ENCODE measurements at regions of chr12 and their contacts with region 1.

Region 1: DNA sequence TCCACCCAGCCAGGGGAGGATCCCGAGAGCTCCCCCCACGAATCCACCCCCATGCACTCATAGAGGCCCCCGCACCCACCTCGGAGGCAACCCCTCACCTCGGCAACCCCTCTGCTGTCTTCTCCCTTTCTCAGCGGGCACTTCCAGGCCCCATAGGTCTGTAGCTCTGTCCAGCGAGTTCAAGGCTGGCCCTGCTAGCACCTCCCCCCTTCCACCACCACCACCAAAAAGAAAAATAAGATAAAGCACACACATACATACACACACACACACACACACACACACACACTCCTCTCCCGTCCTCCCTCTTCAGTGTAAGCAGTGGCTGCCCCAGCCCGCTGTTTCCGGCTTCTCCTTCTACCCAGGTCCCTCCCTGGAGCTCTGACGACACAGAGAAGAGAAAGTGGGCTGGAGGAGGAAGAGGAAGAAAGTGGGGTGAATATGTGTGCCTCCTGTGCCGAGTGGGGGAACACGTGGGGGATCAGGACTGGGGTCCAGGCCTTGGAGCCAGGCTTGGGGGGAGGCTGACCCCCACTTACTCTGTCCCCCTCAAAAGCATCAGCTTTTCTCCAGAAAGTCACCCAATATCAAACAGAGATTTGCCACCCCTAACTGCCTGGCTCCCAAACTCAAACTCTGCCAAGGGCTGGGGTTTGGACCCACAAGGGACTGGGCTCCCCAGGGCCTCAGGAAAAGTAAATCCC is at the start of gene STAT6:
- DNase-seq: no peak
- ATAC-seq: peak; percentile 81
- H3K4me3 ChIP-seq: peak within 1 kb of the TSS; percentile 95
- H3K27ac ChIP-seq: peak within 1 kb of the TSS; percentile 97
- H3K4me1 ChIP-seq: peaks cover 8% of the 10 kb centered on the region
- H3K27me3 ChIP-seq: no peaks in the 10 kb centered on the region
- CTCF ChIP-seq: no peak
- EP300 ChIP-seq: no peak
- POLR2A ChIP-seq: peak; percentile 74
- RAD21 ChIP-seq: no peak
- polyA plus RNA-seq, gene STAT6: 14.2 to 17.3 TPM

Region 2: DNA sequence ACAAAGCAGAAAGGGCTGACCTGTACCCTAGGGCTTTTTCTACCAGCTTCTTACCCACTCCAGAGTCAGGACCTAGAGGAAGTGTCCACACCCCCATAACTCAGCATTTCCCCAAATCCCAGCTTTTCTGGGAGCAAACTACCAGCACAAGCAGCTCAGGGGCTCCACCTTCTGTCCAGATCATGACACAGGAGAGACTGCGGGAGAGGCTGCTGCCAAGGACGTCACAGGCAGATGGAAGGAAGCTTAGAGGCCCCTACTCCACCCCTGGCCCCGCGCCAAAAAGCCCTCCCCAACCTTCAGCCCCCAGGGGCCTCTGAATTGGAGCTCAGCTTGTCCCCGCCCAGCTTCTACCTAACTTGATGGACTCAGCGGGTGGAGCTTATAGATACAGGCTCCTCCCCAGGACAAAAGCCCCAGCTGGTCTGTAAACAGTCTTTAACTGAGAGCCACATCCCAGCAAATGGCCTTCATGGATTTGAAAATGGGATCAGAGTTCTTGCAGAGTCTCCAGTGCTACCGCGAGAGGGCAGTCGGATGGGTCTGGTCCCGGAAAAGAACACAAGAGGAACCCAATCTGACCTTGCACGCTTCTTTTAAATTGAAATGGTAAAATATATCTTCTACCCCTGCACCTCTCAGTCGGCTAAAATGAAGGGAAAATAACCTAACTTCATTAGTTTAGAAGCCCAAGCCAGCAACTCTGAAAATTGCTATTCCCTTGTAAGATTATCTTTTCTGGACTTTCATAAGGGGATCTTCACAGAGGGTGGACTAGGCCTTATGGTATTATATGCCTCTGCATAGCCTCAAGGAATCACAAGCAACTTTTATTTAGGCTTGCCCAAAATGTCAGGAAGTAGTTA is 474.3 kb before region 1 on chr12:
- CTCF ChIA-PET with region 1: interaction called, 5 read pairs
- POLR2A ChIA-PET with region 1: interaction called, 3 read pairs
- RAD21 ChIA-PET with region 1: interaction called, 10 read pairs
- SMC1A ChIA-PET with region 1: no interaction called
- in situ Hi-C with region 1: no loop called
- intact Hi-C with region 1: no loop called
- DNase-seq: peak; percentile 87
- ATAC-seq: peak; percentile 69
- H3K4me3 ChIP-seq: peak overlapping the region; percentile 91
- H3K27ac ChIP-seq: peak overlapping the region; percentile 87
- H3K4me1 ChIP-seq: peaks cover 21% of the 10 kb centered on the region
- H3K27me3 ChIP-seq: no peaks in the 10 kb centered on the region
- CTCF ChIP-seq: peak; percentile 72 to 89 (median 81)
- EP300 ChIP-seq: 0 out of 4 replicates have a peak, but pooled peaks of 1 of the 2 experiments have one; percentile 22
- POLR2A ChIP-seq: no peak
- RAD21 ChIP-seq: peak; percentile 72

Region 3: DNA sequence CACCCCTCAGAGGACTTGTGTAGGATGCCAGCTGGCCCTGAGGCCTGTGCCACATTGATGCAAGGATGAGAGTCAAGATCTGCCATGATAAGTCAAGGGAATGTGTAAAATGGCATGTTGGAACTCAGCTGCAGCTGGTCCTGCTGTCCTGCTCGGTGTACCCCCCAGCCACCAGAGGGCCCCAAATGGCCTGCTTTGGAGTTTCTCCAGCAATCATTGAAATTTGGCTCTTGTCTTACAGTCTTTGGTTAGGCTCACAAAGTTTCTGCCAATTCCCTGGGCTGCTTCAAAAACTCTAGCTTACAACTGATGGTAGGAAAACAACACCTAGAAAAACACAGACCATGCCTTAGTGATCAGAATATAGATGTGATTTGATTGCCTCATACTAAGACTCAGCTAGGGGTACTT is 271.3 kb before region 1 on chr12:
- CTCF ChIA-PET with region 1: interaction called, 14 read pairs
- POLR2A ChIA-PET with region 1: no interaction called
- RAD21 ChIA-PET with region 1: interaction called, 8 read pairs
- SMC1A ChIA-PET with region 1: interaction called, 4 read pairs
- in situ Hi-C with region 1: no loop called
- intact Hi-C with region 1: loop called (anchors 5 kb)
- DNase-seq: peak; percentile 2
- ATAC-seq: peak; percentile 77
- H3K4me3 ChIP-seq: no peak overlapping the region
- H3K27ac ChIP-seq: no peak overlapping the region
- H3K4me1 ChIP-seq: no peaks in the 10 kb centered on the region
- H3K27me3 ChIP-seq: no peaks in the 10 kb centered on the region
- CTCF ChIP-seq: peak; percentile 71 to 75 (median 74)
- EP300 ChIP-seq: no peak
- POLR2A ChIP-seq: no peak
- RAD21 ChIP-seq: peak; percentile 86

Region 4: DNA sequence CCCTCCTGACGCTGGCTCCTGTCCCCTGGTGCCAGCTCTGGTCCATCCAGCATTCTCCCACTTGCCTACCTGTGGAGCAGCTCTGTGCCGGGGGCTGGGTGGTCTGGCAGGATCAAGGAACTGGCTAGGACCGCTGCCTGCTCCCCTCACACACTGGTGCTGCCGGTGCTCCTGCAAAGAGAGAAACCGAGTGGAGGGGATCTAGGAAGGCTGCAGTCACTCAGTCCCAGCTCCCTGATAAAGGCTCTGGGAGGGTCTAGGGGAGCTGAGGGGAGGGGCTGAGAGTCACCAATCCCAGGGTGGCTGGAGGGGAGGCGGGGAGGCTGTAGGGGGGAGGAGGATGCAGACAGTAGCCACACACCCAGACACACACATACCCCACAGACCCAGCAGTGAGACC is 94.9 kb before region 1 on chr12 and contains the start of gene TAC3:
- CTCF ChIA-PET with region 1: interaction called, 117 read pairs
- POLR2A ChIA-PET with region 1: interaction called, 7 read pairs
- RAD21 ChIA-PET with region 1: interaction called, 9 read pairs
- SMC1A ChIA-PET with region 1: interaction called, 54 read pairs
- in situ Hi-C with region 1: no loop called
- intact Hi-C with region 1: no loop called
- DNase-seq: no peak
- ATAC-seq: no peak
- H3K4me3 ChIP-seq: no peak within 1 kb of the TSS
- H3K27ac ChIP-seq: no peak within 1 kb of the TSS
- H3K4me1 ChIP-seq: peaks cover 19% of the 10 kb centered on the region
- H3K27me3 ChIP-seq: no peaks in the 10 kb centered on the region
- CTCF ChIP-seq: no peak
- EP300 ChIP-seq: no peak
- POLR2A ChIP-seq: no peak
- RAD21 ChIP-seq: no peak
- polyA plus RNA-seq, gene TAC3: 0.13 to 0.18 TPM

Region 5: DNA sequence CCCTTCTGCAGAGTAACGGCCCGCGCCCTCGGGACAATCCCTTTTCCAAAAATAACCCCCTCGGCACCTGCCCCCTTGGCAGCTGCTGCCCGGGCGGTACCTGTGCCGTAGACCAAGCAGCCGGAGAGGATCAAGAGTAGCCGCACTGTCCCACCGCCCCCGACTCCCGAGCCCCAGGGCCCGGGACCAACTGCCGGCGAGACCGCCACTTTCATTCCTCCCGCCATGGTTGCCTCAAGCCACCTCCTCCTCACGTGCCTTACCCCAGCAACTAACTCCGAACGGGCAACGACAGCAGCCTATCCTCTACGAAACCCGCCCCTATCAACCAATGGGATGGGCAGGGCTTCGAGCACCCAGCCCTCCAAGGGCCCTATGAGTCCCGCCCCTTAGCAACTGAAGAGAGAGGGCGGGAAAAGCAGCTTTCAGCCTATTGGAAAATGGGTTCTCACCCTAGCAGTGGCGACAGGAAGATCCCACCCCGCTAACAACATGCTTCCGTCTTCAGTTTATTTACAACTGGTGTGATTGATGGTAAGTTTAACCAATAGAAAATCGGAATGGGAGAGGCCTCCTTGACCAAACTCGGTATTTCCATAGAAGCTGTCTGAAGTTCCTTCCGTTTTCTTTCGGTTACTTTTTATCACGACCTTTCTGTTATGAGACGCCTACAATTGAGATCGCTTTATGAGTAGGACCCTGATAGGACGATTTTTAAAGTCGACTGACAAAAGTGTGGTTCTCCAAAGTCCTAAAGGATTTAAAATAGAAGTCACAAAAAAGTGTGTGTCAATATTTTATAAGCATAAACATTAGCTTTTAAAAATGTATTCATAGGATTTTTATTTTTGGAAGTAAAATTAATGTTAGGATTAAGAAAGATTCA is 32.4 kb before region 1 on chr12 and contains the start of gene NEMP1:
- CTCF ChIA-PET with region 1: interaction called, 458 read pairs
- POLR2A ChIA-PET with region 1: interaction called, 94 read pairs
- RAD21 ChIA-PET with region 1: interaction called, 285 read pairs
- SMC1A ChIA-PET with region 1: interaction called, 246 read pairs
- in situ Hi-C with region 1: no loop called
- intact Hi-C with region 1: no loop called
- DNase-seq: peak; percentile 100
- ATAC-seq: peak; percentile 99
- H3K4me3 ChIP-seq: peak within 1 kb of the TSS; percentile 96
- H3K27ac ChIP-seq: peak within 1 kb of the TSS; percentile 92
- H3K4me1 ChIP-seq: peaks cover 6% of the 10 kb centered on the region; the same call in 1 of the 2 replicates
- H3K27me3 ChIP-seq: no peaks in the 10 kb centered on the region
- CTCF ChIP-seq: no peak
- EP300 ChIP-seq: no peak
- POLR2A ChIP-seq: peak; percentile 90
- RAD21 ChIP-seq: no peak
- polyA plus RNA-seq, gene NEMP1: 4.0 to 4.7 TPM

Region 6: DNA sequence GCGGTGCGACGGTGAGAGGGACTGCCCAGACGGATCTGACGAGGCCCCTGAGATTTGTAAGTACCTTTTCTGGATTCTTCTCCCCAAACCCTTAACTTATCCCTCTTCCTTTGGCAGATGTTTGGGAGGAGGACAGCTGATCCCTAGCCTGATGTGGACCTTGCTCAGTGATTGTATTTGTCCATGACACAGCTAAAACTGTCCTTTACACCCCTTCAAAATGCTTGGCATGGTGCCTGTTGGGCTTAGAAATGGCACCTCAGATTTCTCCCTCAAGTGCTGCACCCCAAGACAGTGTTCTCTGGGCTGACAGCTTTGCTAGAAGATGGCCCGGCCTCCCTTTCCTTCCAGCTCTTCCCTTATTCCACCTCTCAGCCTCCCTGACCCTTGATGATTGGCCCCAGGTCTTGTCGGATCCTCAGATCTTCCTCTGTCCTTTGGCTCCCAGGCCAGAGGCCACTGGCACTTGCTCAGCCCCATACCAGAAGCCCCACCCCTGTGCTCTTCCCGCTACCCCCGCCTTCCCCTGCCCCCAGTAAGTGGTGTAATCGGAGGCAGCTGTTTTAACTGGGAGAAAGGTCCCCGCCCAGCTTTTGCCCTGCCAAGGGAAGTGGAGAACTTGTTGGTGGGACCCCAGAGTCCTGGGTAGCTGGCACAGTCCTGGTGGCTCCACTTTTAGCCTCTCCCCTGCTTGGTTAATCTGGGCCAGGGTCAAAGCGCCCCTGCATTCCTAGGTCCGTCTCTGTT is 27.5 kb after region 1 on chr12:
- CTCF ChIA-PET with region 1: no interaction called
- POLR2A ChIA-PET with region 1: no interaction called
- RAD21 ChIA-PET with region 1: no interaction called
- SMC1A ChIA-PET with region 1: no interaction called
- in situ Hi-C with region 1: no loop called
- intact Hi-C with region 1: no loop called
- DNase-seq: no peak
- ATAC-seq: no peak
- H3K4me3 ChIP-seq: no peak overlapping the region
- H3K27ac ChIP-seq: no peak overlapping the region
- H3K4me1 ChIP-seq: no peaks in the 10 kb centered on the region
- H3K27me3 ChIP-seq: no peaks in the 10 kb centered on the region; a peak in 2 of 4 replicates
- CTCF ChIP-seq: no peak
- EP300 ChIP-seq: no peak
- POLR2A ChIP-seq: no peak
- RAD21 ChIP-seq: no peak

Region 7: GRCh38 chr12:57175428-57176138 is 64.4 kb after region 1 on chr12:
- CTCF ChIA-PET with region 1: interaction called, 11 read pairs
- POLR2A ChIA-PET with region 1: no interaction called
- RAD21 ChIA-PET with region 1: interaction called, 6 read pairs
- SMC1A ChIA-PET with region 1: interaction called, 3 read pairs
- in situ Hi-C with region 1: no loop called
- intact Hi-C with region 1: no loop called
- DNase-seq: no peak
- ATAC-seq: peak; percentile 60
- H3K4me3 ChIP-seq: no peak overlapping the region
- H3K27ac ChIP-seq: no peak overlapping the region
- H3K4me1 ChIP-seq: no peaks in the 10 kb centered on the region
- H3K27me3 ChIP-seq: no peaks in the 10 kb centered on the region; a peak in 1 of 4 replicates
- CTCF ChIP-seq: peak; percentile 53 to 78 (median 54)
- EP300 ChIP-seq: no peak
- POLR2A ChIP-seq: no peak
- RAD21 ChIP-seq: peak; percentile 27; the same call in 1 of the 2 replicates

Region 8: DNA sequence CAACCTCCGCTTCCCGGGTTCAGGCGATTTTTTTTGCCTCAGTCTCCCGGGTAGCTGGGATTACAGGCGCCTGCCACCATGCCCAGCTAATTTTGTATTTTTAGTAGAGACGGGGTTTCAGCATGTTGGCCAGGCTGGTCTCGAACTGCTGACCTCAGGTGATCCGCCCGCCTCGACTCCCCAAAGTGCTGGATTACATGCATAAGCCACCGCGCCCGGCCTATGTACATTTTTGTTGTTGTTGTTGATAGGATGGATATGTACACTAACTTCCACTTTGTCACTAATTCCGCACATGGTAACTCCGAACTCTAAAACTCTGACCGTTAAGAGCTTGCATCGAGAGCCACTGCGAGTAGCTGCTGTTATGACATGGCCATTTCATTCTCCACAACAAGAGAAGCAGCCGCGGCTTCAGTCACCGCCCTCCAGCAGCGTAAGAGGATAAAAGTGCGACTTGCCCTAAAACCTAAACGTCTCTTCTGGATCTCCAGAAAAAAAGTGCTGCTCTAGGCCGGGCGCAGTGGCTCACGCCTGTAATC is 375.9 kb after region 1 on chr12:
- CTCF ChIA-PET with region 1: no interaction called
- POLR2A ChIA-PET with region 1: no interaction called
- RAD21 ChIA-PET with region 1: no interaction called
- SMC1A ChIA-PET with region 1: no interaction called
- in situ Hi-C with region 1: no loop called
- intact Hi-C with region 1: no loop called
- DNase-seq: no peak
- ATAC-seq: no peak
- H3K4me3 ChIP-seq: peak overlapping the region; percentile 42
- H3K27ac ChIP-seq: no peak overlapping the region
- H3K4me1 ChIP-seq: peaks cover 6% of the 10 kb centered on the region
- H3K27me3 ChIP-seq: no peaks in the 10 kb centered on the region
- CTCF ChIP-seq: no peak
- EP300 ChIP-seq: no peak
- POLR2A ChIP-seq: no peak
- RAD21 ChIP-seq: no peak

Region 9: GRCh38 chr12:57539134-57539768 is 428.1 kb after region 1 on chr12:
- CTCF ChIA-PET with region 1: no interaction called
- POLR2A ChIA-PET with region 1: no interaction called
- RAD21 ChIA-PET with region 1: no interaction called
- SMC1A ChIA-PET with region 1: no interaction called
- in situ Hi-C with region 1: no loop called
- intact Hi-C with region 1: no loop called
- DNase-seq: no peak
- ATAC-seq: no peak
- H3K4me3 ChIP-seq: no peak overlapping the region
- H3K27ac ChIP-seq: no peak overlapping the region
- H3K4me1 ChIP-seq: no peaks in the 10 kb centered on the region
- H3K27me3 ChIP-seq: no peaks in the 10 kb centered on the region
- CTCF ChIP-seq: no peak
- EP300 ChIP-seq: no peak
- POLR2A ChIP-seq: no peak
- RAD21 ChIP-seq: no peak